ENCODE measurements at regions of chr11 and their contacts with region 1.

Region 1: GRCh38 chr11:128467610-128468041 is 119.7 kb downstream of the ETS1 start:
- DNase-seq: peak; percentile 93
- H3K4me3 ChIP-seq: no peak overlapping the region
- H3K27ac ChIP-seq: peak overlapping the region; percentile 59
- H3K4me1 ChIP-seq: peaks cover 26% of the 10 kb centered on the region
- H3K27me3 ChIP-seq: no peaks in the 10 kb centered on the region
- CTCF ChIP-seq: peak in 1 of 2 donors; percentile 30

Region 2: GRCh38 chr11:128506999-128507611 is 39.5 kb after region 1 on chr11:
- CTCF ChIA-PET with region 1: no interaction called
- dilution Hi-C with region 1: loop called (anchors 5 kb)
- in situ Hi-C with region 1: no loop called
- intact Hi-C with region 1: loop called (anchors 1 kb)
- DNase-seq: peak; percentile 90
- H3K4me3 ChIP-seq: peak overlapping the region; percentile 27 to 41 (median 32)
- H3K27ac ChIP-seq: peak overlapping the region; percentile 88
- H3K4me1 ChIP-seq: peaks cover 80% of the 10 kb centered on the region
- H3K27me3 ChIP-seq: no peaks in the 10 kb centered on the region
- CTCF ChIP-seq: no peak